ENCODE measurements at regions of chr19 and their contacts with region 1.

Region 1: DNA sequence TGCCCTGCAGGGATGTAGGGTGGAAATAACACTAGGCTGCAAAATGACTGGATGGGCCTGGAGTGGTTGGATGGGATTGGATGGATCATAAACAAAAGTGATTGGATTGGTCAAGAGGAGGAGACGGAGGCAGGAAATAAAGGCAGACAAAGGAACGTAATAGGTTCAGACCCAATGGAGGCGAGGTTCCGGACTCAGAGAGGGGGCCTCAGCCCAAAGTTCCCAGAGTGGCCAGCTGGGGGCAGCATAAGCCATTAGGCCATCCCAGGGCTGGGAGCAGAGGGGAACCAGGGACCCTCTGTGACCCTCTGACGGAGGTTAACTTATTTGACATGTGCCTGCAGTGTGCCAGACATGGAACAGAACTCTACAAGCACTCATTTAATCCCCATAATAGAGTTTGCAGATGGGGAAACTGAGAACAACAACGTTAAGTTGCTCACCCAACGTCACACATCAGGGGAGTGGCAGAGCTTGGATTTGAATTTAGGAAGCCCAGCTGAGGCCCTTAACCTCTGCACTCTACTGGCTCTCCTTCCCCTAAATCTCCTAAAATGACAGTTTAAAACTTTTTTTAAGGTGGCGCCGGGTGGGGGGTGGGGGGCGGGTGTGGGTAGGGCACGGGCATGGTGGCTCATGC is 15.3 kb upstream of the MAP1S start:
- DNase-seq: peak; percentile 85
- ATAC-seq: peak; percentile 99
- H3K4me3 Mint-ChIP-seq: no peak overlapping the region
- H3K27ac Mint-ChIP-seq: no peak overlapping the region
- H3K4me1 Mint-ChIP-seq: no peaks in the 10 kb centered on the region
- H3K27me3 Mint-ChIP-seq: peaks cover 2% of the 10 kb centered on the region
- CTCF ChIP-seq: peak; percentile 96

Region 2: GRCh38 chr19:17718947-17719711 is 15.2 kb after region 1 on chr19 and contains the start of gene MAP1S:
- CTCF ChIA-PET with region 1: interaction called, 34 read pairs
- POLR2A ChIA-PET with region 1: interaction called, 6 read pairs
- intact Hi-C with region 1: no loop called
- DNase-seq: peak; percentile 76
- ATAC-seq: peak; percentile 86
- H3K4me3 Mint-ChIP-seq: peak within 1 kb of the TSS; percentile 82
- H3K27ac Mint-ChIP-seq: peak within 1 kb of the TSS; percentile 87
- H3K4me1 Mint-ChIP-seq: peaks cover 33% of the 10 kb centered on the region
- H3K27me3 Mint-ChIP-seq: no peaks in the 10 kb centered on the region
- CTCF ChIP-seq: no peak
- total RNA-seq, gene MAP1S: 53.8 to 54.7 TPM

Region 3: DNA sequence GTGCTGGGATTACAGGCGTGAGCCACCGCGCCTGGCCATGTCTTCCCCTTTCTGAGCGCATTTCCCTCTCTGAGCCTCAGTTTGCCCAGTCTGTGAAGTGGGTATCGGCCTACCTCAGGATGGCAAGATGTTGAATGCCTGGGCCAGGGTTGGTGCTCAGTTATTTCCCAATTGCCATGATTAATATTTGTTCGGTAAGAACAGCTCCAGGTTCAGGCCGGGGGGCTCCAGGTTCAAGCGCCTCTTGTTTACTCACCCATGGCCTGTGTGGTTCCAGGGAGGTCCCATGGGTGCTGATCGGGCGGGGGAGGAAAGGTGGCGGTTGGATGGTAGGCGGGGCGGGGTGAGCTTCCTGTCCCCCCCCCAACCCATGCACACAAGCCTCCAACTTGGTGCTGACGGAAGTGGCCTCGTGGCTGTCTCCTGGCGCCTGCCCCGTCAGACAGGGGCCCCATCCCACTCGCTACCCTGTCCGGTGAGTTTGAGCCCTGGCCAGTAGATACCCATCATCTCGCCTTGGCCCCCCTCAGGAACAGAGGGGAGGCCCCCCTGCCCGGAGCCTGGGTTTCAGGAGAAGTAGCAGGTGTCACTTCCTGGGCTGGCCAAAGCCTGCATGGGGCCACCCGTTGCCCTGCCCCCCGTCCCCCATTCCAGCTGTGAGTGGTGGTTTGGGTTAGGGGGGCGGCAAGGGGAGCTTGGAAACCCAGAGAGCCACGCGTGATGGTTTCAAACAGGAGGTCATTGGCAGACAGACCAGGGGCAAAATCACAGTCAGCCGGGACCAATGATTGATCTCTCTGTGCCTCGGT is 47.4 kb after region 1 on chr19 and contains the start of gene FCHO1:
- CTCF ChIA-PET with region 1: interaction called, 10 read pairs
- POLR2A ChIA-PET with region 1: interaction called, 3 read pairs
- intact Hi-C with region 1: no loop called
- DNase-seq: peak; percentile 95
- ATAC-seq: peak; percentile 68
- H3K4me3 Mint-ChIP-seq: peak within 1 kb of the TSS; percentile 80
- H3K27ac Mint-ChIP-seq: peak within 1 kb of the TSS; percentile 92
- H3K4me1 Mint-ChIP-seq: peaks cover 58% of the 10 kb centered on the region
- H3K27me3 Mint-ChIP-seq: no peaks in the 10 kb centered on the region
- CTCF ChIP-seq: no peak
- total RNA-seq, gene FCHO1: 36.9 to 38.3 TPM

Region 4: GRCh38 chr19:17775245-17775916 is 71.4 kb after region 1 on chr19:
- CTCF ChIA-PET with region 1: interaction called, 15 read pairs
- POLR2A ChIA-PET with region 1: no interaction called
- intact Hi-C with region 1: loop called (anchors 5 kb)
- DNase-seq: peak; percentile 62
- ATAC-seq: no peak
- H3K4me3 Mint-ChIP-seq: no peak overlapping the region
- H3K27ac Mint-ChIP-seq: no peak overlapping the region
- H3K4me1 Mint-ChIP-seq: peaks cover 29% of the 10 kb centered on the region
- H3K27me3 Mint-ChIP-seq: no peaks in the 10 kb centered on the region
- CTCF ChIP-seq: peak; percentile 55

Measured in activated CD8-positive, alpha-beta T cell treated with anti-CD3 and anti-CD28 coated beads for 36 hours (primary cell).